ENCODE measurements at regions of chr17 and their contacts with region 1.

Region 1: GRCh38 chr17:42760652-42761581 is at the start of gene RAMP2:
- DNase-seq: peak in 1 of 5 donors; percentile 24
- H3K4me3 ChIP-seq: no peak within 1 kb of the TSS
- H3K4me3 Mint-ChIP-seq: peak within 1 kb of the TSS; percentile 32 to 60 (median 38)
- H3K27ac ChIP-seq: no peak within 1 kb of the TSS
- H3K27ac Mint-ChIP-seq: no peak within 1 kb of the TSS
- H3K4me1 ChIP-seq: peaks cover 6% of the 10 kb centered on the region
- H3K4me1 Mint-ChIP-seq: peaks cover 0 to 15% (median 2%) of the 10 kb centered on the region in 3 donors
- H3K27me3 ChIP-seq: peaks cover 38% of the 10 kb centered on the region
- H3K27me3 Mint-ChIP-seq: peaks cover 35 to 77% of the 10 kb centered on the region in 2 donors
- total RNA-seq, gene RAMP2: not detected

Region 2: DNA sequence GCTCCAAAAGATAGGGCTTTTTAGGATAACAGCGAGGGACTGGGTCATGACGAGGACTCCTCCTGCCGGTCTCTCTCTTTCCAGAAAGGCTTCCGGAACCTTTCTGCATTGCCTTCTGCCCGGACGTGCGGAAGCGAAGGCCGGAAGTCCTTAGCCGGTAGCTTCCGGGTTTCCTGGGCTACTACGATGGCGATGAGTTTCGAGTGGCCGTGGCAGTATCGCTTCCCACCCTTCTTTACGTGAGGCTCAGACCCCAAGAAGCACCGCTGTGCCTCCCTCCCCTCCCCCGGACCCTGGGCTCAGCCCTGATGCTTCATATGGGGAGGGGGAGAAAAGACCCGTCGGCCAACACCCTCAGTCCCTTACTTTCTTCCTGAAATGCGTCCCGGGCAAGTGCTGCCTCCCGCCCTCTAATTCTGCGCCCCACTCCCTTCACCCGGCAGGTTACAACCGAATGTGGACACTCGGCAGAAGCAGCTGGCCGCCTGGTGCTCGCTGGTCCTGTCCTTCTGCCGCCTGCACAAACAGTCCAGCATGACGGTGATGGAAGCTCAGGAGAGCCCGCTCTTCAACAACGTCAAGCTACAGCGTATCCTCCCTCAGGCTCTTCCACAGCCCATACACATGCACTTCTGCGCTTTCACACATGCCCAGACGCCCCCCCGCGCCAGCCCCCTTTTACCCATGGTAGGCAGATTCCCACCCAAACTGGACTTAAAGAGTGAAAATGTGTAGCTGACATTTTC is 12.5 kb after region 1 on chr17 and contains the start of gene VPS25:
- CTCF ChIA-PET with region 1: interaction called, 10 read pairs
- POLR2A ChIA-PET with region 1: interaction called, 3 read pairs
- DNase-seq: peak; percentile 57 to 84 (median 68)
- H3K4me3 ChIP-seq: peak within 1 kb of the TSS; percentile 99
- H3K4me3 Mint-ChIP-seq: peak within 1 kb of the TSS; percentile 91 to 99 (median 98)
- H3K27ac ChIP-seq: peak within 1 kb of the TSS; percentile 91
- H3K27ac Mint-ChIP-seq: peak within 1 kb of the TSS; percentile 88 to 100 (median 99)
- H3K4me1 ChIP-seq: peaks cover 11% of the 10 kb centered on the region
- H3K4me1 Mint-ChIP-seq: peaks cover 19 to 34% (median 30%) of the 10 kb centered on the region in 3 donors
- H3K27me3 ChIP-seq: no peaks in the 10 kb centered on the region
- H3K27me3 Mint-ChIP-seq: peaks cover 0 to 2% of the 10 kb centered on the region in 2 donors
- total RNA-seq, gene VPS25: 101 to 108 TPM

Region 3: DNA sequence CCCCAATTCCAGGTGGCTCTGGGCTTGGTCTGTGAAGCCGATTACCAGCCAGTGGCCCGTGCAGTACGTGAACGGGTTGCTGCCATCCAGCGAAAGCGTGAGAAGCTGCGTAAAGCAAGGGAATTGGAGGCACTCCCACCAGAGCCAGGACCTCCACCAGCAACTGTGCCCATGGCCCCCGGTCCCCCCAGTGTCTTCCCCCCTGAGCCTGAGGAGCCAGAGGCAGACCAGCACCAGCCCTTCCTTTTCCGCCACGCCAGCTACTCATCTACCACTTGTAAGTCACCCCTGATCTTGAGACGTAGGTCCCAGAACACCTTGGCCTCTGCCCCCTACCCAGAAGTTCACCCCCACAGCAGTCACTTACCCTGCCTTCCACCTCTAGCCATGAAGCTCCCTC is 26.3 kb after region 1 on chr17:
- CTCF ChIA-PET with region 1: no interaction called
- POLR2A ChIA-PET with region 1: no interaction called
- DNase-seq: no peak
- H3K4me3 ChIP-seq: no peak overlapping the region
- H3K4me3 Mint-ChIP-seq: no peak overlapping the region
- H3K27ac ChIP-seq: no peak overlapping the region
- H3K27ac Mint-ChIP-seq: no peak overlapping the region
- H3K4me1 ChIP-seq: peaks cover 13% of the 10 kb centered on the region
- H3K4me1 Mint-ChIP-seq: peaks cover 13 to 30% (median 16%) of the 10 kb centered on the region in 3 donors
- H3K27me3 ChIP-seq: peaks cover 32% of the 10 kb centered on the region
- H3K27me3 Mint-ChIP-seq: peaks cover 51 to 70% of the 10 kb centered on the region in 2 donors

Region 4: GRCh38 chr17:42846614-42847282 is 85.8 kb after region 1 on chr17:
- CTCF ChIA-PET with region 1: no interaction called
- POLR2A ChIA-PET with region 1: no interaction called
- DNase-seq: no peak
- H3K4me3 ChIP-seq: no peak overlapping the region
- H3K4me3 Mint-ChIP-seq: peak overlapping the region in 1 of 7 donors; percentile 40
- H3K27ac ChIP-seq: no peak overlapping the region
- H3K27ac Mint-ChIP-seq: peak overlapping the region in 3 of 8 donors; percentile 29 to 64 (median 54)
- H3K4me1 ChIP-seq: no peaks in the 10 kb centered on the region
- H3K4me1 Mint-ChIP-seq: peaks cover 0 to 8% (median 6%) of the 10 kb centered on the region in 3 donors
- H3K27me3 ChIP-seq: no peaks in the 10 kb centered on the region
- H3K27me3 Mint-ChIP-seq: peaks cover 0 to 2% of the 10 kb centered on the region in 2 donors

Region 5: GRCh38 chr17:42857389-42857788 is 96.5 kb after region 1 on chr17:
- CTCF ChIA-PET with region 1: no interaction called
- POLR2A ChIA-PET with region 1: no interaction called
- DNase-seq: no peak
- H3K4me3 ChIP-seq: no peak overlapping the region
- H3K4me3 Mint-ChIP-seq: no peak overlapping the region
- H3K27ac ChIP-seq: no peak overlapping the region
- H3K27ac Mint-ChIP-seq: peak overlapping the region in 1 of 8 donors; percentile 38
- H3K4me1 ChIP-seq: no peaks in the 10 kb centered on the region
- H3K4me1 Mint-ChIP-seq: no peaks in the 10 kb centered on the region
- H3K27me3 ChIP-seq: no peaks in the 10 kb centered on the region
- H3K27me3 Mint-ChIP-seq: peaks cover 9 to 19% of the 10 kb centered on the region in 2 donors

Measured in CD8-positive, alpha-beta memory T cell (primary cell).